HEK293 (cell line): ENCODE measurements at regions of chr9 and their contacts with region 1.

Region 1: GRCh38 chr9:5886114-5886939 is 4.4 kb upstream of the MLANA start:
- H3K4me3 ChIP-seq: no peak overlapping the region
- H3K27ac ChIP-seq: no peak overlapping the region
- H3K4me1 ChIP-seq: no peaks in the 10 kb centered on the region
- CTCF ChIP-seq: peak; percentile 85

Region 2: DNA sequence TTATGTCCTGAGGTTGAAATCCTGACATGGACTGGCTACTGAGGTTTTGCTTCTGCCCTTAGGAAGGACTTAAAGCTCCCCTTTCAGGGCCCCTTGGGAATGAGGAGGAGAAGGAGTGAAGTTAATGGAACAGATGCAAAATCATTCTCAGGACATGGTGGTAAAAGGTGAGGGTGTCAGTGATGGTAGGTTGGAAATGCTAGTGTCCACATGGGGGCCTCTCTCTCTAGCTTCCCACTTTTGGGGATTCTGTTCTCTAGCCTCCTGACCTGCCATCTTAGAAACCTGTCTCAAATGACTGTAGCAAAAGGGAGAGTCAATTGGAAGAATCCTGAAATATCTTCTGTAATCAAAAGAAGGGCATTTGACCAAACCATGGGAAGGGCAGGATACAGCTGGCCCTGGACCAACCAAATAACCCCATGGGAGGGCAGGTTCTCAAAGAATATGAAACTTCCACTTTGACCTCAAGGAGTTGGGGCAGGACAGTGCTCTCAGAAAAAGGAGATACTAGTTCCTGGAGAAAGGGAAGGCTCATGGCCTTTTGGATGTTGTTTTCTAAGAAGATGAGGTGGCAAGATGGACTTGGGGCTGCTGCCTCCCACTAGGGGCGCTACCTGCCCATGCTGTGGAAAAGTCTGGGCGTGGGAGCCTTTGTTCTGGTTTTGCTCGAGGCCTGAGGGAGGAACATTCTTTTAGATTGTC is 16.9 kb before region 1 on chr9:
- CTCF ChIA-PET with region 1: interaction called, 14 read pairs
- POLR2A ChIA-PET with region 1: no interaction called
- H3K4me3 ChIP-seq: no peak overlapping the region
- H3K27ac ChIP-seq: no peak overlapping the region
- H3K4me1 ChIP-seq: no peaks in the 10 kb centered on the region
- CTCF ChIP-seq: no peak

Region 3: GRCh38 chr9:6008169-6008979 is 122.0 kb after region 1 on chr9:
- CTCF ChIA-PET with region 1: interaction called, 15 read pairs
- POLR2A ChIA-PET with region 1: no interaction called
- H3K4me3 ChIP-seq: peak overlapping the region; percentile 76
- H3K27ac ChIP-seq: peak overlapping the region; percentile 80
- H3K4me1 ChIP-seq: peaks cover 4% of the 10 kb centered on the region; the same call in 1 of the 2 replicates
- CTCF ChIP-seq: no peak

Region 4: GRCh38 chr9:6055213-6055612 is 168.9 kb after region 1 on chr9:
- CTCF ChIA-PET with region 1: interaction called, 77 read pairs
- POLR2A ChIA-PET with region 1: interaction called, 3 read pairs
- H3K4me3 ChIP-seq: no peak overlapping the region
- H3K27ac ChIP-seq: no peak overlapping the region
- H3K4me1 ChIP-seq: no peaks in the 10 kb centered on the region
- CTCF ChIP-seq: no peak